ENCODE measurements at regions of chr5 and their contacts with region 1.

Region 1: GRCh38 chr5:172479044-172479783 is 24.9 kb upstream of the SH3PXD2B start:
- DNase-seq: peak; percentile 53
- H3K4me3 ChIP-seq: no peak overlapping the region
- H3K27ac ChIP-seq: no peak overlapping the region
- H3K4me1 ChIP-seq: no peaks in the 10 kb centered on the region
- H3K27me3 ChIP-seq: no peaks in the 10 kb centered on the region
- CTCF ChIP-seq: peak; percentile 75 to 93 (median 91)

Region 2: GRCh38 chr5:172697123-172698121 is 218.2 kb after region 1 on chr5:
- dilution Hi-C with region 1: loop called (anchors 25 kb)
- DNase-seq: peak; percentile 36
- H3K4me3 ChIP-seq: peak overlapping the region; percentile 39 to 85 (median 79)
- H3K27ac ChIP-seq: no peak overlapping the region
- H3K4me1 ChIP-seq: peaks cover 8% of the 10 kb centered on the region
- H3K27me3 ChIP-seq: peaks cover 25% of the 10 kb centered on the region
- CTCF ChIP-seq: peak; percentile 87 to 92 (median 89)

Measured in keratinocyte (primary cell).